ENCODE measurements at regions of chr5 and their contacts with region 1.

Region 1: GRCh38 chr5:81425569-81425968 is 31.6 kb upstream of the ACOT12 start:
- DNase-seq: no peak
- H3K4me3 ChIP-seq: no peak overlapping the region
- H3K27ac ChIP-seq: peak overlapping the region; percentile 27
- H3K4me1 ChIP-seq: peaks cover 26% of the 10 kb centered on the region
- H3K27me3 ChIP-seq: no peaks in the 10 kb centered on the region
- CTCF ChIP-seq: peak; percentile 22 to 64 (median 38)
- POLR2A ChIP-seq: no peak

Region 2: GRCh38 chr5:81525690-81526089 is 100.1 kb after region 1 on chr5:
- intact Hi-C with region 1: no loop called
- DNase-seq: no peak
- H3K4me3 ChIP-seq: no peak overlapping the region
- H3K27ac ChIP-seq: no peak overlapping the region
- H3K4me1 ChIP-seq: no peaks in the 10 kb centered on the region
- H3K27me3 ChIP-seq: no peaks in the 10 kb centered on the region
- CTCF ChIP-seq: no peak
- POLR2A ChIP-seq: no peak

Region 3: GRCh38 chr5:81590498-81591384 is 165.2 kb after region 1 on chr5:
- intact Hi-C with region 1: no loop called
- DNase-seq: no peak
- H3K4me3 ChIP-seq: no peak overlapping the region
- H3K27ac ChIP-seq: no peak overlapping the region
- H3K4me1 ChIP-seq: no peaks in the 10 kb centered on the region
- H3K27me3 ChIP-seq: no peaks in the 10 kb centered on the region
- CTCF ChIP-seq: no peak
- POLR2A ChIP-seq: no peak

Region 4: GRCh38 chr5:81971712-81972495 is 546.3 kb after region 1 on chr5 and contains the start of gene ATG10:
- intact Hi-C with region 1: loop called (anchors 5 kb)
- DNase-seq: peak in 1 of 2 donors; percentile 93
- H3K4me3 ChIP-seq: peak within 1 kb of the TSS; percentile 61 to 72
- H3K27ac ChIP-seq: peak within 1 kb of the TSS; percentile 97
- H3K4me1 ChIP-seq: peaks cover 10% of the 10 kb centered on the region
- H3K27me3 ChIP-seq: no peaks in the 10 kb centered on the region
- CTCF ChIP-seq: no peak
- POLR2A ChIP-seq: peak; percentile 59 to 97
- total RNA-seq, gene ATG10: 4.2 TPM

Region 5: GRCh38 chr5:82165740-82166530 is 740.4 kb after region 1 on chr5:
- intact Hi-C with region 1: loop called (anchors 10 kb)
- DNase-seq: peak in 1 of 2 donors; percentile 91
- H3K4me3 ChIP-seq: no peak overlapping the region
- H3K27ac ChIP-seq: peak overlapping the region; percentile 52
- H3K4me1 ChIP-seq: peaks cover 22% of the 10 kb centered on the region
- H3K27me3 ChIP-seq: no peaks in the 10 kb centered on the region
- CTCF ChIP-seq: peak in 2 of 3 experiments; percentile 64 to 77
- POLR2A ChIP-seq: no peak